H1 (cell line): ENCODE measurements at regions of chr17 and their contacts with region 1.

Region 1: GRCh38 chr17:81101614-81102306 is 63.5 kb upstream of the PVALEF start:
- DNase-seq: peak; percentile 81 to 97
- H3K4me3 ChIP-seq: no peak overlapping the region
- H3K27ac ChIP-seq: no peak overlapping the region
- H3K4me1 ChIP-seq: peaks cover 0 to 9% (median 5%) of the 10 kb centered on the region in 4 experiments; a peak in 5 of 7 replicates
- H3K27me3 ChIP-seq: no peaks in the 10 kb centered on the region
- CTCF ChIP-seq: peak; percentile 98 to 100 (median 100)
- EP300 ChIP-seq: peak in 1 of 2 experiments; percentile 79; a peak in 1 of 3 replicates
- POLR2A ChIP-seq: no peak
- RAD21 ChIP-seq: peak; percentile 86 to 96

Region 2: GRCh38 chr17:81018044-81018802 is 83.5 kb before region 1 on chr17:
- CTCF ChIA-PET with region 1: interaction called, 110 read pairs
- POLR2A ChIA-PET with region 1: interaction called, 3 read pairs
- DNase-seq: no peak
- H3K4me3 ChIP-seq: no peak overlapping the region
- H3K27ac ChIP-seq: no peak overlapping the region
- H3K4me1 ChIP-seq: peaks cover 0 to 3% (median under 1%) of the 10 kb centered on the region in 4 experiments; a peak in 4 of 7 replicates
- H3K27me3 ChIP-seq: no peaks in the 10 kb centered on the region
- CTCF ChIP-seq: no peak
- EP300 ChIP-seq: no peak
- POLR2A ChIP-seq: no peak
- RAD21 ChIP-seq: no peak

Region 3: GRCh38 chr17:81040791-81041337 is 60.9 kb before region 1 on chr17:
- CTCF ChIA-PET with region 1: interaction called, 103 read pairs
- POLR2A ChIA-PET with region 1: interaction called, 6 read pairs
- DNase-seq: peak in 1 of 2 experiments; percentile 78
- H3K4me3 ChIP-seq: no peak overlapping the region
- H3K27ac ChIP-seq: no peak overlapping the region
- H3K4me1 ChIP-seq: peaks cover 0 to 17% (median 6%) of the 10 kb centered on the region in 4 experiments; a peak in 6 of 7 replicates
- H3K27me3 ChIP-seq: peaks cover 0 to 6% (median 0%) of the 10 kb centered on the region in 4 experiments; a peak in 3 of 7 replicates
- CTCF ChIP-seq: peak; percentile 73 to 91 (median 75)
- EP300 ChIP-seq: no peak
- POLR2A ChIP-seq: no peak
- RAD21 ChIP-seq: peak; percentile 42 to 44; a peak in 2 of 4 replicates

Region 4: DNA sequence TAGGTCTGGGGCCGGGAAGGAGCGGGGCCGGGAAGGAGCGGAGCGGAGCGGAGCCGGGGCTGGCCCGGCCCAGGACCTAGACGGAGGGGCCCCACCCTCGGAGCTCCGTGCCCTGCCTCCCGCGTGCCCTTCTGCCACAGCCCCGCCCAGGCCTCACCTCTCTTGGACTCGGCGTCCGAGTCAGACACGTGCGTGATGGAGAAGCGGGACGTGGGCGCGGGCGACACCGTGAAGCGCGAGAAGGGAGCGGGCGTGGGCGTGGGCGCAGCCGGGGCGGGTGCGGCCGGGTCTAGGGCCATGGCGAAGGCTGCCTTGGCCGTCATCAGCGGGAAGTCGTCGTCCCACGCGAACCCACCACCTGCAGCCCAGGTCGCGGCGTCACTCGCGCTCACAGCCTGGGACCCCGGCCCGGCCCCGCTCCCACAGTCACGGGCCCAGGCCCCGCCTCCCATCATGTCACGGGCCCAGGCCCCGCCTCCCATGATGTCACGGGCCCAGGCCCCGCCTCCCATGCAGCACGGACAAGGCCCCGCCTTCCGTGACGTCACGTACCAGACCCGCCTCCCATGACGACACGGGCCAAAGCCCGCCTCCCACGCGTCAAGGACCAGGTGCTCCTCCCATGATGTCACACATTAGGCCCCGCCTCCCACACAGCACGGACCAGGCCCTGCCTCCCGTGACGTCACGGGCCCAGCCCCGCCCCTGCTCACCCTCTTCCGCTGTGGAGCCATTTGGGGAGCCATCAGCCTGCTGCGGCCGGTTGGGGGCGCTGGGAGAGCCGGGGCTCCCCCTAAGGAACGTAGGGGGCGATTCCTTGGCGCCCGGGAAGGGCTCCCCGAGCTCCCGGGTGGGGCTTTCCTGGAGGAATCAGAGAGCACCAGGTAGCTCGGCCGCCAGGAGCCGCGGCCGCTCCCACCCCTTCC is 17.7 kb after region 1 on chr17:
- CTCF ChIA-PET with region 1: interaction called, 45 read pairs
- POLR2A ChIA-PET with region 1: interaction called, 4 read pairs
- DNase-seq: peak; percentile 82 to 100
- H3K4me3 ChIP-seq: peak overlapping the region; percentile 26 to 66 (median 50)
- H3K27ac ChIP-seq: no peak overlapping the region
- H3K4me1 ChIP-seq: peaks cover 0 to 16% (median 6%) of the 10 kb centered on the region in 4 experiments; a peak in 5 of 7 replicates
- H3K27me3 ChIP-seq: peaks cover 0 to 11% (median 7%) of the 10 kb centered on the region in 4 experiments; a peak in 3 of 7 replicates
- CTCF ChIP-seq: peak; percentile 32 to 54 (median 50)
- EP300 ChIP-seq: peak in 1 of 2 experiments; percentile 53; a peak in 1 of 3 replicates
- POLR2A ChIP-seq: 0 out of 3 replicates have a peak, but pooled peaks of 1 of the 2 experiments have one; percentile 22
- RAD21 ChIP-seq: peak; percentile 19 to 30; a peak in 2 of 4 replicates

Region 5: DNA sequence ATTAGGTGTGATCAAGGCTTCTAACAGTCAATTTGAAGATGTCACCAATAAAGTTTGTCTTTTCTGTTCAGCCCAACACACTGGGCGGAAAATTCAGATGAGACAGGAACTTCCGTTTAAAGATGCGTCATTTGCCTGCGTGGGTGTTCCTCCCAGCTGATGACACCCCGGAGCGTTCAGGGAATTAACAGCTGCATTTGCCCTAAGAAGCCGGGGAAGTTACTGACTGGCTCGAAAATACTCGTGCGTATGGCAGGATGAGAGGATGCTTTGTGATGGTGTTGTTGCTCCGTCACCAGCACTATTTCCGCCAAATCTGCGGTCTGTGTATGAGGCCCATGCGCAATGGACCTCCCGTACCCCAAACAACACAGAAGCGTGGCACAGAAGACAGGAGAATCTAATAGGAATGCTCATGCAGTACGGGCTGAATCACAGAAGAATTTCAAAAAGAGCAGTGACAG is 51.6 kb after region 1 on chr17:
- CTCF ChIA-PET with region 1: no interaction called
- POLR2A ChIA-PET with region 1: no interaction called
- DNase-seq: no peak
- H3K4me3 ChIP-seq: no peak overlapping the region
- H3K27ac ChIP-seq: no peak overlapping the region
- H3K4me1 ChIP-seq: no peaks in the 10 kb centered on the region; a peak in 1 of 7 replicates
- H3K27me3 ChIP-seq: no peaks in the 10 kb centered on the region
- CTCF ChIP-seq: no peak
- EP300 ChIP-seq: no peak
- POLR2A ChIP-seq: no peak
- RAD21 ChIP-seq: no peak

Region 6: GRCh38 chr17:81163703-81164370 is 62.1 kb after region 1 on chr17:
- CTCF ChIA-PET with region 1: no interaction called
- POLR2A ChIA-PET with region 1: no interaction called
- DNase-seq: no peak
- H3K4me3 ChIP-seq: no peak overlapping the region
- H3K27ac ChIP-seq: no peak overlapping the region
- H3K4me1 ChIP-seq: peaks cover 0 to 12% (median 3%) of the 10 kb centered on the region in 4 experiments; a peak in 4 of 7 replicates
- H3K27me3 ChIP-seq: peaks cover 0 to 7% (median 4%) of the 10 kb centered on the region in 4 experiments; a peak in 5 of 7 replicates
- CTCF ChIP-seq: no peak
- EP300 ChIP-seq: no peak
- POLR2A ChIP-seq: no peak
- RAD21 ChIP-seq: no peak